ENCODE measurements at regions of chr2 and their contacts with region 1.

Region 1: GRCh38 chr2:151085181-151085611 is 176.5 kb downstream of the RBM43 start:
- DNase-seq: no peak
- ATAC-seq: no peak
- H3K4me3 ChIP-seq: no peak overlapping the region
- H3K27ac ChIP-seq: no peak overlapping the region
- H3K4me1 ChIP-seq: peaks cover 0 to 23% (median 0%) of the 10 kb centered on the region in 9 donors
- H3K27me3 ChIP-seq: no peaks in the 10 kb centered on the region
- CTCF ChIP-seq: no peak

Region 2: DNA sequence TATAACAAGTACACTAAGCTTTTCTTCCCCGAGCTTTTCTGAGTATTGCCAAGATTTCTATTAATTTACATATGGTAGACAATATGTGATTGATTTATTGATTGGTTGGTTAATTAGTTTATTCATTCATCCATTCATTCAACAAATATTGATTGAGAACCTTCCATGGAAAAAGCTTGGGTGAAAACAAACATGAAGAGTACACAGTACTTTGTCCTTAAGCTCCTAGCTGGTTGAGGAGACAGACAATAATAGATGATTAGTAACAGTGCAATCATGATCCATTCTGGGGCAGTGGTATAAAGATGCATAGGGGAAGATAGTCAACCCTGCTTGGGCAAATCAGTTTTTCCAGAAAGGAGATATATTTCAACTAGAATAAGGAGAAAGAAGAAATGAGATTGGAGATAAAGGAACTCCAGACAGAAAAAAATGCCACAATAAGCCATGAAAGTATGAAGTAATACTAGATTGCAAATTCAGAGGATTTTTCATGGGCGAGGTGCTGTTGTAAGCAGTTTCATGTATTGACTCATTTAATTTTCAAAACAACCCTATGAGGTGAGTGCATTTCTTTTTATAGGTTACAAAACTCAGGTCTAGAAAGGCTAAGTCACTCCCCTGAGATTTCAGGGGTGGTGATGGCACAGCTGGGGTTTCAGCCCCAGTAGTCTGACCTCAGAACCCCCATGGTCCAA is 727.3 kb before region 1 on chr2:
- intact Hi-C with region 1: no loop called
- DNase-seq: no peak
- ATAC-seq: no peak
- H3K4me3 ChIP-seq: no peak overlapping the region
- H3K27ac ChIP-seq: no peak overlapping the region
- H3K4me1 ChIP-seq: no peaks in the 10 kb centered on the region
- H3K27me3 ChIP-seq: no peaks in the 10 kb centered on the region
- CTCF ChIP-seq: no peak

Region 3: GRCh38 chr2:151106805-151107506 is 21.8 kb after region 1 on chr2:
- intact Hi-C with region 1: loop called in 1 of 10 experiments (anchors 1 kb)
- DNase-seq: no peak
- ATAC-seq: no peak
- H3K4me3 ChIP-seq: no peak overlapping the region
- H3K27ac ChIP-seq: no peak overlapping the region
- H3K4me1 ChIP-seq: no peaks in the 10 kb centered on the region
- H3K27me3 ChIP-seq: no peaks in the 10 kb centered on the region
- CTCF ChIP-seq: no peak